Activated B cell treated with CpG ODN at 0.5 μM for 24 hours (primary cell): ENCODE measurements at regions of chr20 and their contacts with region 1.

Region 1: DNA sequence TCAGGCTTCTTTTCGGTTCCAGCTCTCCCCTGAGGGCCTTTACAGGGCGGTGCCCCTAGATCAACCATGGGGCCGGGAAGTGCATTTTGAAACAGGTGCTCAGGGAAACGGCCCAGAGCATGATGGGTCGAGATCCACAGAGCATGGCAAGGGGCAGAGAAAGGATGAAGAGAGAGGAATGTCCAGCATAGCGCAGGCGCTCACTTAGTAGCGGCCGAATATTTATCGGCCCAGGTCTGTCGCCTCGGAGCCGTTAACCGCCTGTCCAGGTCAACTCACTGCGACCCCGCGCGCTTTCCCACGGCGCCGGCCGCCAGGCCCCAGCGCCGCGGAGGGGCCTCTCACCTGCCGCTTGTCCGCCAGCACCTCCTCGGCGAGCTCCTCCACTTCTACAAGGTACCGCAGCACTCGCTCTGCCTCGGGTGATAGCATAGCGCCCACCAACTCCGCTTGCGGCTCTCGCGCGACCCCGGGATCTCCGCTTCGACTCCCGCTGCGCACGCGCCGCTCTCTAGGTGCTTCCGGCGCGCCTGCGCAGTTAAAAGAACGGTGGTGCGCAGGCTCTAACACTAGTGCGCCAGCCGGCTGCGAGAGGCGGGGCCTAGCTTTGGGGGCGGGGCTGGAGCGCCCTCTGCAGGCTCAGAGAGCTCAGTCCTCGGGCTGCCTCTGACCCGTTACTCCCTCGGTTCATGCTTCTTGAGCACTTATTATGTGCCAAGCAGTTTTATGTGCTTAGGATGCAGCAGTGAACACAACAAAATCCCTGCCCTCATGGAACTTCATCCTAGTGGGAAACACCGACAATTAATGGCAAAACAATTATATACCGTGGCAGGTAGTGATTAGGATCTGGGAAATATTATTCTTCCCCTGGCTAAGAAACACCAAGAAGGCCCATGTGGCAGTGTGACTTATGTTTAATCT is at the start of gene PDRG1:
- DNase-seq: peak; percentile 99
- ATAC-seq: peak; percentile 99
- H3K4me3 Mint-ChIP-seq: peak within 1 kb of the TSS; percentile 99
- H3K27ac Mint-ChIP-seq: peak within 1 kb of the TSS; percentile 95
- H3K4me1 Mint-ChIP-seq: peaks cover 30% of the 10 kb centered on the region
- H3K27me3 Mint-ChIP-seq: peaks cover 11% of the 10 kb centered on the region
- CTCF ChIP-seq: peak; percentile 51
- total RNA-seq, gene PDRG1: 16.4 and 18.7 TPM in 2 replicates

Region 2: GRCh38 chr20:31822421-31823330 is 129.1 kb before region 1 on chr20:
- CTCF ChIA-PET with region 1: interaction called, 25 read pairs
- POLR2A ChIA-PET with region 1: no interaction called
- intact Hi-C with region 1: loop called (anchors 1 kb)
- DNase-seq: peak; percentile 79
- ATAC-seq: peak; percentile 97
- H3K4me3 Mint-ChIP-seq: no peak overlapping the region
- H3K27ac Mint-ChIP-seq: no peak overlapping the region
- H3K4me1 Mint-ChIP-seq: peaks cover 4% of the 10 kb centered on the region
- H3K27me3 Mint-ChIP-seq: no peaks in the 10 kb centered on the region
- CTCF ChIP-seq: peak; percentile 92

Region 3: DNA sequence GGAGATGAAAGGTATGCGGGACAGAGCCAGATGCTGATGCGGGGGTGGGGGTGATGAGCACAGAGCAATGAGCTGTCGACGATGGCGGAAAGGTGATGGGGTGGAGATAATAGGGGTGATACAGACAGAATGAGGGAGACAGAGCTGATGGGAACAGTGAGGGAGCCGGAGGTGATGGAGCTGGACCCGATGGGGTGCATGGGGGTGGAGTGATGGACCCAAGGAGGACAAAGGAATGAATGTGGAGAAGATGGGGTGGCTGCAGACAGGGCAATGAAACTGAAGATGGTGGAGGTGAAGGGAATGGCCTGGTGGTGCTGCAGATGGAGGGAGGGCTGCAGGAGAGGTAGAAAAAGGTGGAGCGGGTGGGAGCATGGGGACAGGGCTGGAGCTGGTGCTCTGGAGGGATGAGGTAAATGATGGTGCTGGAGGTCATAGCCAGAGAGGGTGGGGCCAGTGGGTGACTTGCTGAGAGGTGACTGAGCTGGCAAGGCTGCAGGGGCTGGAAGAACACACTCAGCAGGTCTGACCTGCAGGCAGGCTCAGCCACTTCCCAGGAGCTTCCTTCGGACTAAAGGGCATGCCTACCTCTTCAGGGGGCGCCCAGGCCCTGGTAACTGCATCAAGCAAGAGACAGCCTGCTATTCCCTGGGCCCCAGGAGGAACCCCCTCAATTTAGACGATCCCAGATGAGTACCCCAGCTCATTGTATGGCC is 100.4 kb before region 1 on chr20:
- CTCF ChIA-PET with region 1: interaction called, 126 read pairs
- POLR2A ChIA-PET with region 1: interaction called, 22 read pairs
- intact Hi-C with region 1: loop called (anchors 1 kb)
- DNase-seq: no peak
- ATAC-seq: no peak
- H3K4me3 Mint-ChIP-seq: no peak overlapping the region
- H3K27ac Mint-ChIP-seq: no peak overlapping the region
- H3K4me1 Mint-ChIP-seq: no peaks in the 10 kb centered on the region
- H3K27me3 Mint-ChIP-seq: peaks cover 25% of the 10 kb centered on the region
- CTCF ChIP-seq: no peak

Region 4: GRCh38 chr20:31861346-31862156 is 90.2 kb before region 1 on chr20:
- CTCF ChIA-PET with region 1: interaction called, 126 read pairs
- POLR2A ChIA-PET with region 1: interaction called, 12 read pairs
- intact Hi-C with region 1: loop called (anchors 2 kb)
- DNase-seq: peak; percentile 62
- ATAC-seq: peak; percentile 88
- H3K4me3 Mint-ChIP-seq: peak overlapping the region; percentile 56
- H3K27ac Mint-ChIP-seq: no peak overlapping the region
- H3K4me1 Mint-ChIP-seq: peaks cover 18% of the 10 kb centered on the region
- H3K27me3 Mint-ChIP-seq: peaks cover 6% of the 10 kb centered on the region
- CTCF ChIP-seq: no peak

Region 5: GRCh38 chr20:31894980-31895675 is 56.7 kb before region 1 on chr20:
- CTCF ChIA-PET with region 1: interaction called, 4 read pairs
- POLR2A ChIA-PET with region 1: interaction called, 8 read pairs
- intact Hi-C with region 1: loop called (anchors 1 kb)
- DNase-seq: peak; percentile 25
- ATAC-seq: peak; percentile 100
- H3K4me3 Mint-ChIP-seq: peak overlapping the region; percentile 28
- H3K27ac Mint-ChIP-seq: peak overlapping the region; percentile 86
- H3K4me1 Mint-ChIP-seq: peaks cover 15% of the 10 kb centered on the region
- H3K27me3 Mint-ChIP-seq: no peaks in the 10 kb centered on the region
- CTCF ChIP-seq: no peak

Region 6: DNA sequence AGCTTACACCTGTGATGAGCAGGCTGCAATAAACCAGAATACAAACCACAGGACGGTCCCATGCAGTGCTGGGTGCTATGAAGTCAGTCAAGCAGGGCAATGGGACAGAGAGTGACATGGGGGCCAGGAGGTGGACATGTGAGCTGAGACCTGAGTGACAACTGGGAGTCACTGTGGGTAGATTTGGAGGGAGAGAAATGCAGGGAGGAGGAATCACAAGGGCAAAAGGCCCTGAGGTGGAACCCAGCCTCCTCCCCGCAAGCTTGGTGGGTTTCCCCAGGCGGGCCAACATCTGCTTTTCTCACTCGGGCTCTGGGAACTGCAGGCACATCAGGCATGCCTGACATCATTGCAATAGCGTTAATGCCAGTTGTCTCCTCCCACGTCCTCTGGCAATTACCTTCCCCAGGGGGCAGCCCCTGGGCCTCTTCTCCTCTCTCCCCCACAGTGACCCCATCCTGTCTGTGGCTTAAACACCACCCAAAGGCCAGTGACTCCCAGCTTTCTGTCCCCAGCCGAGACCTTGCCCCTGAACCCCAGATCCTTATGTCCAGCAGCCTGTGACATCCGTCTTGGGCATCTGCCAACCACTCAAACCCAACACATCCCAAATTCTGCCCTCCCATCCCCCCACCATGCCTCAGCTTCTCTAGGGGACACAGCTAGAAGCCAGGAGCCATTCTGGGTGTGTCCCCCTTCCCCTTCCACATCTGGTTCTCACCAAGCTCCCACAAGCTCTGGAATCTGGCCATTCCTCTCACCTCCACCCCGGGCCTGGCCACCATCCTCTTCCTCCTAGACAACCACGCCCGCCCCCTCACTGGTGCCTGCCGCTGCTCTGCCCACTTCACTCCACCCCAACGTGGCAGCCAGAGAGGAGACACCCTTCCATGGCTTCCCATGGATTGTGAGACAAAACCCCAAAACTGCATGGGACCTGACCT is 28.1 kb before region 1 on chr20:
- CTCF ChIA-PET with region 1: no interaction called
- POLR2A ChIA-PET with region 1: no interaction called
- intact Hi-C with region 1: no loop called
- DNase-seq: no peak
- ATAC-seq: peak; percentile 75
- H3K4me3 Mint-ChIP-seq: no peak overlapping the region
- H3K27ac Mint-ChIP-seq: peak overlapping the region; percentile 15
- H3K4me1 Mint-ChIP-seq: peaks cover 12% of the 10 kb centered on the region
- H3K27me3 Mint-ChIP-seq: peaks cover 18% of the 10 kb centered on the region
- CTCF ChIP-seq: no peak

Region 7: GRCh38 chr20:32007787-32008616 is 56.2 kb after region 1 on chr20:
- CTCF ChIA-PET with region 1: no interaction called
- POLR2A ChIA-PET with region 1: no interaction called
- intact Hi-C with region 1: no loop called
- DNase-seq: no peak
- ATAC-seq: no peak
- H3K4me3 Mint-ChIP-seq: no peak overlapping the region
- H3K27ac Mint-ChIP-seq: no peak overlapping the region
- H3K4me1 Mint-ChIP-seq: no peaks in the 10 kb centered on the region
- H3K27me3 Mint-ChIP-seq: peaks cover 26% of the 10 kb centered on the region
- CTCF ChIP-seq: no peak

Region 8: DNA sequence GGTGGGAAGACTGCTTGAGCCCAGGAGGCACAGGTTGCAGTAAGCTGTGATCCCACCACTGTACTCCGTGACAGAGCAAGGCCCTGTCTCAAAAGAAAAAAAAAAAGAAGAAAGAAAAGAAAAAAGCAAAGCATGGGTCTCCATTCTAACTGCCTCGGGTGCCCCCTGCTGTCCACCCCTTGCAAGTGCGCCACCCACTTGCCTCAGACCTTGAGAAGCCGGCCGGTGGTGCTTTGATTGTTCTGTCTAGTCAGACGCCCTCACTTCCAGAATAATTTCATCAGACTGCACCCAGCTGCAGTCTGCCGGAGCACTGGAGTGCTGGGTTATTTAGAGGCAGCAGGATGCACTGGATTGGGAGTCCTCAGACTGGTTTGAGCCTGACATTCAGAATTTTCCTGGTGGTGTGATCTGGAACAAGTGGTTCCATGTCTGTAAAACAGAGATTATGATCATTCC is 140.1 kb after region 1 on chr20:
- CTCF ChIA-PET with region 1: interaction called, 11 read pairs
- POLR2A ChIA-PET with region 1: no interaction called
- intact Hi-C with region 1: loop called (anchors 1 kb)
- DNase-seq: peak; percentile 68
- ATAC-seq: peak; percentile 92
- H3K4me3 Mint-ChIP-seq: no peak overlapping the region
- H3K27ac Mint-ChIP-seq: no peak overlapping the region
- H3K4me1 Mint-ChIP-seq: peaks cover 14% of the 10 kb centered on the region
- H3K27me3 Mint-ChIP-seq: no peaks in the 10 kb centered on the region
- CTCF ChIP-seq: peak; percentile 70

Region 9: DNA sequence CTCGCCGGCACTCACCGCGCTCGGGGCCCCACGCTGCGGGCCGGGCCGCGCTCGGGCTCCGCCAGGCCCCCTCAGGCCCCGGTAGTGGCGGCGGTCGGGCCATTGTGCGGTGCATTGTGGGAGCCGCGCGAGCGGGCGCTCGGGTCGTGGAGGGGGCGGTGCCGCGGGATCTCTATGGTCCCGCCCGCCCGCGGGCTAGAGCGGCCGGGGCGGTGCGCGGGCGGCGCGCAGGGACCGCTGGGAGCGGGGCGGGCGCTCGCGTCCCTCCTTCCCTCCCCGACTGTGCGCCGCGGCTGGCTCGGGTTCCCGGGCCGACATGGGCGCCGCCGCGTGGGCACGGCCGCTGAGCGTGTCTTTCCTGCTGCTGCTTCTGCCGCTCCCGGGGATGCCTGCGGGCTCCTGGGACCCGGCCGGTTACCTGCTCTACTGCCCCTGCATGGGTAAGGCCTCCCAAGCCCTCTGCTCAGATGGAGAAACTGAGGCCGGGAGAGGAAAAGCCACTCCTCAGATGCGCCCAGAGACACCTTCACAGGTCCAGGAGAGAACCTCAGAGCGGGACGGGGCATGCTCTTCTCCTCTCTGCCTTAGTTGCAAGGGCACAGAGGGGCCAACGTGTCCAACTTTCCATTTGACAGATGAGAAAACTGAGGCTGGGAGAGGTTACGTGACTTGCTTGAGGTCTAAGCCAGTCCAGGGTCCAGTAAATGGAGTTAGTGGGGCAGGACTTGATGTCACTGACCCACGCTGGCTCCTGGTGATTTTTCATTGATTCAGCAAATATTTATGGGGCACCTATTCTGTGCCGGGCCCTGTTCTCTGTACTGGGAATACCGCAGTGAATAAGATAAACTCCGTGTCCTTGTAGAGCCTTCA is 256.1 kb after region 1 on chr20 and contains the starts of genes PLAGL2 and POFUT1:
- CTCF ChIA-PET with region 1: no interaction called
- POLR2A ChIA-PET with region 1: no interaction called
- intact Hi-C with region 1: loop called (anchors 10 kb)
- DNase-seq: peak; percentile 92
- ATAC-seq: peak; percentile 97
- H3K4me3 Mint-ChIP-seq: peak within 1 kb of the TSS; percentile 91
- H3K27ac Mint-ChIP-seq: peak within 1 kb of the TSS; percentile 85
- H3K4me1 Mint-ChIP-seq: peaks cover 62% of the 10 kb centered on the region
- H3K27me3 Mint-ChIP-seq: no peaks in the 10 kb centered on the region
- CTCF ChIP-seq: no peak
- total RNA-seq, gene PLAGL2: 17.3 and 17.9 TPM in 2 replicates
- total RNA-seq, gene POFUT1: 20.4 and 24.0 TPM in 2 replicates